ENCODE measurements at regions of chr10 and their contacts with region 1.

Region 1: DNA sequence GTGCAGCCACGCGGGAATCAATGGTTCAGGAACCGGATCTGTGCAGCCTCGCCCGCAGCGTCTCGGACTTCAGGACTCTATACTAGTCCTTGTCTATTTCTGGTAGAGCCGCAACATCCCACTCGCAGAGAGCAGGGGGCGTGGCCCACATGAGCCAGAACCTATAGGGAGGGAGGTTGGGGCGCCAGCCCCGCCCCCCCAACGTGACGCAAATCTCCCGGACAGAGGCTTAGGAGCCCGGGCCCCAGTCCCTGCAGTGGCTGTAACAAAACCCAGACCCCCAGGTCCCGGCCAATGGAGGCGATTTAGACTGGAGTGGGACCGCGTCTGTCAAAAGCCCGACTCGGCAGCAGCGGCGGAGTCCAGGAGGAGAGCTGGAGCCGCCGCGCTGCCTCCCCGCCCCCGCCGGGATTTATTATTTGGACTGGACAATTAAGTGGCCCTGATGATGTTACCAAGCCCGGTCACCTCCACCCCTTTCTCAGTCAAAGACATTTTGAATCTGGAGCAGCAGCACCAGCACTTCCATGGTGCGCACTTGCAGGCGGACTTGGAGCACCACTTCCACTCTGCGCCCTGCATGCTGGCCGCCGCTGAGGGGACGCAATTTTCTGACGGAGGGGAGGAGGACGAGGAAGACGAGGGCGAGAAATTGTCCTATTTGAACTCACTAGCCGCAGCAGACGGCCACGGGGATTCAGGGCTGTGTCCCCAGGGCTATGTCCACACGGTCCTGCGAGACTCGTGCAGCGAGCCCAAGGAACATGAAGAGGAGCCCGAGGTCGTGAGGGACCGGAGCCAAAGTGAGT is at the start of gene NKX2-3:
- DNase-seq: peak; percentile 78
- H3K4me3 Mint-ChIP-seq: no peak within 1 kb of the TSS
- H3K27ac Mint-ChIP-seq: no peak within 1 kb of the TSS
- H3K4me1 Mint-ChIP-seq: peaks cover 34% of the 10 kb centered on the region
- H3K27me3 Mint-ChIP-seq: peaks cover 86% of the 10 kb centered on the region
- total RNA-seq, gene NKX2-3: not detected

Region 2: GRCh38 chr10:99234041-99234790 is 298.7 kb before region 1 on chr10:
- CTCF ChIA-PET with region 1: no interaction called
- POLR2A ChIA-PET with region 1: no interaction called
- intact Hi-C with region 1: loop called (anchors 5 kb)
- DNase-seq: peak; percentile 58
- H3K4me3 Mint-ChIP-seq: peak overlapping the region; percentile 56
- H3K27ac Mint-ChIP-seq: no peak overlapping the region
- H3K4me1 Mint-ChIP-seq: peaks cover 31% of the 10 kb centered on the region
- H3K27me3 Mint-ChIP-seq: peaks cover 67% of the 10 kb centered on the region

Region 3: GRCh38 chr10:99328579-99329523 is 204.0 kb before region 1 on chr10 and contains the start of gene CNNM1:
- CTCF ChIA-PET with region 1: no interaction called
- POLR2A ChIA-PET with region 1: no interaction called
- intact Hi-C with region 1: no loop called
- DNase-seq: peak; percentile 48
- H3K4me3 Mint-ChIP-seq: peak within 1 kb of the TSS; percentile 35
- H3K27ac Mint-ChIP-seq: no peak within 1 kb of the TSS
- H3K4me1 Mint-ChIP-seq: peaks cover 10% of the 10 kb centered on the region
- H3K27me3 Mint-ChIP-seq: peaks cover 32% of the 10 kb centered on the region
- total RNA-seq, gene CNNM1: 0.41 to 0.43 TPM

Region 4: DNA sequence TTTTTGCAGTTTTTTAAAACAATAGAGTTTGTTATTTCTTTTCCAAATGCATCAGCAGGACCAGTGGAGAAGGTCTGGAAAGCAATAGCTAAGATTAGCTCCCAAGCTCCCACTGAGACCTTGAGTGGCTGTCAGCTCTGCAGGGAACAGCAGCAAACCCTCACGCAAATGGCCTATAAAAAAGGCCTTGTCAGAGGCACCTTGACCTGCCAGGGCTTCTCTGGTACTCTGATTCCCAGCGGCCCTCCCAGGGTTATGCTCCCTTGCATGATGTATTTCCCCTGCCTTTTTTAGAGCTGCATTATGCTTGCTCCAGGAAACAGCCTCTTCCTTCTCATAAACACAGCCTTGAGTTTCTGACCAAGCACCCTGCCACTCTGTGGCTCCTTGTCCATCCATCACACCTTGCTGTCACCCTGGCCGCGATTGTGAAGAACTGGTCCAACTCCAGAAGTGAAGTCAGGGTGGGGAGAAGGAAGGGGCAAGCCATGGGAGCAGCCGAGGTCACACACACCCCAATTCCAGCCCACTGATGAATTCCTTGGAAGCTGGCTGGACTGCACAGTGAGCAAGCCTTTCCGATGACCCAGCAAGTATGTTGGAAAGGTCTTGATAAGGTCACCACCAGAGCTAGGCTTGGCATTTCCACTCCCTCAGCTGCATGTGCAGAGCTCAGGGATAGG is 35.4 kb before region 1 on chr10:
- CTCF ChIA-PET with region 1: no interaction called
- POLR2A ChIA-PET with region 1: no interaction called
- intact Hi-C with region 1: no loop called
- DNase-seq: no peak
- H3K4me3 Mint-ChIP-seq: no peak overlapping the region
- H3K27ac Mint-ChIP-seq: no peak overlapping the region
- H3K4me1 Mint-ChIP-seq: no peaks in the 10 kb centered on the region
- H3K27me3 Mint-ChIP-seq: peaks cover 16% of the 10 kb centered on the region

Region 5: DNA sequence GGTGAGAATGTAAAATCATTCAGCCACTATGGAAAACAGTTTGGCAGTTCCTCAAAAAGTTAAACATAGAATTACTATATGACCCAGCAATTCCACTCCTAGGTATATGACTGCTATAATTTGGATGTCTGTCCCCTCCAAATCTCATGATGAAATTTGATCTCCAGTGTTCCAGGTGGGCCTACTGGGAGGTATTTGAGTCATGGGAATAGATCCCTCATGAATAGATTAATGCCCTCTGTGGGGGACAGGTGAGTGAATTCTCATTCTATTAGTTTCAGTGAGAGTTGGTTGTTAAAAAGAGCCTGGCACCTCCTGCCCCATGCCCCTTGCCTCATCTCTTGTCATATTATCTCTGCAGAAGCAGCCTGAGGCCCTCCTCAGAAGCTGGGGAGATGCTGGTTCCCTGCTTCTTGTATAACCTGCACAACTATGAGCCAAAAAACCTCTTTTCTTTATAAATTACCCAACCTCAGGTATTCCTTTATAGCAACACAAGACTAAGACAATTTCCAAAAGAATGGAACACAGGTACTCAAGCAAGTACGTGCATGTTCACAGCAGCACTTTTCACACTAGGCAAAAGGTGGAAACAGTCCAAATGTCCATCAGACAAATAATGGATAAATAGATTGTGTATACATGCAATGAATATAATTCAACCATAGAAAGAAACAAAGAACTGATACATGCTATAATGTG is 96.2 kb after region 1 on chr10:
- CTCF ChIA-PET with region 1: no interaction called
- POLR2A ChIA-PET with region 1: no interaction called
- intact Hi-C with region 1: no loop called
- DNase-seq: no peak
- H3K4me3 Mint-ChIP-seq: no peak overlapping the region
- H3K27ac Mint-ChIP-seq: no peak overlapping the region
- H3K4me1 Mint-ChIP-seq: peaks cover 4% of the 10 kb centered on the region
- H3K27me3 Mint-ChIP-seq: peaks cover 17% of the 10 kb centered on the region

Measured in activated CD4-positive, alpha-beta memory T cell treated with anti-CD3 and anti-CD28 coated beads for 36 hours (primary cell).